ENCODE measurements at regions of chr14 and their contacts with region 1.

Region 1: GRCh38 chr14:24442273-24443052 is at the start of gene SDR39U1:
- DNase-seq: peak; percentile 99 to 100
- H3K4me3 ChIP-seq: peak within 1 kb of the TSS; percentile 40
- CTCF ChIP-seq: no peak
- POLR2A ChIP-seq: peak in 1 of 2 donors; percentile 66
- total RNA-seq, gene SDR39U1: 21.0 to 39.1 (median 30.2) TPM

Region 2: GRCh38 chr14:22505697-22506377 is 1936.6 kb before region 1 on chr14:
- intact Hi-C with region 1: loop called (anchors 5 kb)
- DNase-seq: no peak
- H3K4me3 ChIP-seq: no peak overlapping the region
- CTCF ChIP-seq: no peak
- POLR2A ChIP-seq: no peak

Region 3: DNA sequence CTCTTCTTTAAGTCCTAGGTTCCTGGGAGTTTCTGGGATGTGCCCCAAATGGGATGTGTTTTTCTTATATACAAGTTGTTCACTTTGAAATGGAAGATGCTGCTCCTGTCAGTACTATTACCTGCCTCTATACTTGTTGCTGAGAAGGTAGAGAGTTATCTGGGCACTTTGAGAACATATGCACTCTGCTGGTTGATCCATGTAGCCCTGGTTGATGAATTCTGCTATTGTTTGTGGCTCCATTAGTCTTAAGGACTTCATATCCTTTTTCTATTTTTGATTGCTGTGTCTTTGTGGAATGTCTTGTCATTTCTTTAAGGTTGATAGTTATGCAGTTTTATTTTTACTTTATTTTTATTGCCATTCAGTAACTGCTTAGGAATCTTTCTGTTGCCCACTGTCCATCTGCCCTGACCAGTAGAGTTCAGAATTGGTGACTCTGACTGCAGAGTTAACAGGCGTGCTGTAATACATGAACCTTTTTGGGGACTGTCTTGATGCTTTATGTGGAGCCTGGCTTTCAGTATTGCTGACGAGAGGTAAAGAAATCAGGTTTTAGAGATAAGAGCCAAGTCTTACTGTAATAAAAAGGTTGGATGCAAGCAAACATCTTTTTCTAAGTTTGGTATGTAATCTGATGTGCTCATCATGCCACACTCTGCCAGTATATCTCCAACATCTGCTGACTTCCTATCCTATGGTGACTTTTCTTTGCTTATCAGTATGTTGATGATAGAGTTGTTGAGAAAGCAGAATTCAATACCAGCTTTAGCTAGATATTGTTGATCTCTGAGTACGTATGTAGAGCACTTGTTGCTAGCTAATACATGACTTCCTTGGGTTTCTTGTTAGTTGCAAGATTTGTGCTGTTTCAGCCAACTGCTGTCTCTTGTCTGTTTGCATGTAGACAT is 208.1 kb before region 1 on chr14:
- intact Hi-C with region 1: loop called (anchors 2 kb)
- DNase-seq: no peak
- H3K4me3 ChIP-seq: no peak overlapping the region
- CTCF ChIP-seq: no peak
- POLR2A ChIP-seq: no peak

Measured in lower leg skin (tissue), 4 donors.